ENCODE measurements at regions of chr1 and their contacts with region 1.

Region 1: GRCh38 chr1:200409761-200410565 is at the start of gene ZNF281:
- DNase-seq: peak; percentile 96
- H3K4me3 Mint-ChIP-seq: peak within 1 kb of the TSS; percentile 96
- H3K27ac Mint-ChIP-seq: peak within 1 kb of the TSS; percentile 93
- H3K4me1 Mint-ChIP-seq: peaks cover 48% of the 10 kb centered on the region
- H3K27me3 Mint-ChIP-seq: no peaks in the 10 kb centered on the region
- total RNA-seq, gene ZNF281: 6.4 to 7.5 TPM

Region 2: GRCh38 chr1:200351826-200352549 is 58.0 kb before region 1 on chr1:
- CTCF ChIA-PET with region 1: no interaction called
- intact Hi-C with region 1: loop called (anchors 1 kb)
- DNase-seq: peak; percentile 46
- H3K4me3 Mint-ChIP-seq: peak overlapping the region; percentile 29
- H3K27ac Mint-ChIP-seq: peak overlapping the region; percentile 43
- H3K4me1 Mint-ChIP-seq: peaks cover 33% of the 10 kb centered on the region
- H3K27me3 Mint-ChIP-seq: no peaks in the 10 kb centered on the region

Region 3: GRCh38 chr1:200454425-200454824 is 44.5 kb after region 1 on chr1:
- CTCF ChIA-PET with region 1: no interaction called
- intact Hi-C with region 1: no loop called
- DNase-seq: no peak
- H3K4me3 Mint-ChIP-seq: no peak overlapping the region
- H3K27ac Mint-ChIP-seq: no peak overlapping the region
- H3K4me1 Mint-ChIP-seq: peaks cover 4% of the 10 kb centered on the region
- H3K27me3 Mint-ChIP-seq: peaks cover 7% of the 10 kb centered on the region

Region 4: GRCh38 chr1:200473698-200474371 is 63.9 kb after region 1 on chr1:
- CTCF ChIA-PET with region 1: no interaction called
- intact Hi-C with region 1: loop called (anchors 1 kb)
- DNase-seq: peak; percentile 36
- H3K4me3 Mint-ChIP-seq: no peak overlapping the region
- H3K27ac Mint-ChIP-seq: peak overlapping the region; percentile 60
- H3K4me1 Mint-ChIP-seq: peaks cover 35% of the 10 kb centered on the region
- H3K27me3 Mint-ChIP-seq: peaks cover 23% of the 10 kb centered on the region

Region 5: DNA sequence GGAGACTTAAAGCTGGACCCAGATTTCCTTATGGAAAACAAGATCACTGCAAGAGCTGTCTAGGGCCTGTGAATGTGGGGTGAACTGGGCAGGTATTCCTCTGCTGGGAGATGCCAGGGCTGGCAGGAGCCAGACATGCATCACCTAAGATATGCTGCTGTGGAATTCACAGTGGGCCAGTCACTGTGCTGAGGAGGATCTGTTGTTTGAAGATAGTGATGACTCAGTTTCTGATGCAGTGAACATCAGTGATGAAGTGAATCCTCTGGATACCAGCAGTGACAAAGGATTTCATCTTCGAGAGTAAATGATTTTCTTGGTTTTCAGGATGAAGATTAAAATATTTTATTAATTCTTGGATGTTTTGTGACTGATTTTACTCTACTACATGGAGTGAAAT is 298.8 kb after region 1 on chr1:
- CTCF ChIA-PET with region 1: no interaction called
- intact Hi-C with region 1: no loop called
- DNase-seq: no peak
- H3K4me3 Mint-ChIP-seq: no peak overlapping the region
- H3K27ac Mint-ChIP-seq: no peak overlapping the region
- H3K4me1 Mint-ChIP-seq: no peaks in the 10 kb centered on the region
- H3K27me3 Mint-ChIP-seq: no peaks in the 10 kb centered on the region

Measured in activated naive CD4-positive, alpha-beta T cell treated with anti-CD3 and anti-CD28 coated beads for 36 hours (primary cell).